PC-3 (cell line): ENCODE measurements at regions of chr2 and their contacts with region 1.

Region 1: DNA sequence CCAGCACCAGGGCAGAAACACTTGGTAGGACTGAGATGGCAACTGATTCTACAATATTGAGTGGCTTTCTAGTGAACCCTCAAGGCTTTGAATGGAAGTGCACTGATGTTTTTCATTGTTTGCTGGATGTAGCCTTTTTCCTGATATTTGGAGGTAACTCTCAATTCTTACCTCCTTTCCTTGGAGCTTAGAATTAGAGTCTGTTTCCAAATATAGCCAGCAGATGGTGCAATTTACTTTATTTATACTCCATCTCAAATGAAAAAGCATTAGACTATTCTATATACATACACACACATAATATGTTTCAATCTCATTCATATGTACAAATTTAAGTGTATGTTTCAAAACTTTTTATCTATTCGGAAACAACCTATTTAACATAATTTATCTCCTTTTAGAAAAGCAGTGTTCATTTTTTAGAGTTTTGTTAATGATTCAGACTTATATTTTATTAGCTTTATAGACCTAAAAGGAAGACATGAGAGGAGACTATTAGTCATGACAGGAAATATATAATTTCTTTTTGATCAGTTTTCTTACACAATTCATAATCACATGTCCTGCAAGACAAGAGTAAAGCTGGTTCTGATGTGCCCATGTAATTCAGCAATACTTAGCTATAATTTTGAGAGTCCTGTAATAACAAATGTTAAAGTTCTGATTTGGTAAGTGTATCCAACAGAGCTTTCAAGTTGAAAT is 124.8 kb downstream of the NUP35 start:
- DNase-seq: peak; percentile 69
- ATAC-seq: peak; percentile 70
- H3K4me3 ChIP-seq: no peak overlapping the region
- H3K27ac ChIP-seq: no peak overlapping the region
- H3K4me1 ChIP-seq: no peaks in the 10 kb centered on the region
- H3K27me3 ChIP-seq: no peaks in the 10 kb centered on the region
- CTCF ChIP-seq: peak; percentile 81

Region 2: DNA sequence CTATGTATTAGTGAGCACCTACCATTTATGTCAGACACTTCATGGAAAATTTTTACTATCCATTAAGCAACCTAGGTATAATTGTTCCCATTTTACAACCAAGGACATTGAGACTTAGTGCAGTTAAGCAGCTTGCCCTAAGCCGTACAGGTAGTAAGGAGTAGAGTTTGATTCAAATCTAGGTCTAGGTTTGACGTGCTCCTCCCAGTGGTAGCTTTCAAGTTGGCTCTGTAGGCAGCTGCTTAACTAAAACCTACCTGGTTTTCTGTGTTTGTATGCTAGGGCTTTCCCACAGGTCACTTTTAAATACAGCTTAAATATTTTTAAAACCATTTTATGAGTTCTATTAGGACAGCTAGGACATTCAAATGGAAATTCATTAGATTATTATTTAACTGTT is 55.1 kb before region 1 on chr2:
- CTCF ChIA-PET with region 1: no interaction called
- POLR2A ChIA-PET with region 1: no interaction called
- intact Hi-C with region 1: no loop called
- DNase-seq: no peak
- ATAC-seq: no peak
- H3K4me3 ChIP-seq: no peak overlapping the region
- H3K27ac ChIP-seq: no peak overlapping the region
- H3K4me1 ChIP-seq: no peaks in the 10 kb centered on the region
- H3K27me3 ChIP-seq: no peaks in the 10 kb centered on the region
- CTCF ChIP-seq: no peak

Region 3: GRCh38 chr2:183292028-183292427 is 43.0 kb after region 1 on chr2:
- CTCF ChIA-PET with region 1: no interaction called
- POLR2A ChIA-PET with region 1: no interaction called
- intact Hi-C with region 1: loop called (anchors 2 kb)
- DNase-seq: no peak
- ATAC-seq: no peak
- H3K4me3 ChIP-seq: no peak overlapping the region
- H3K27ac ChIP-seq: no peak overlapping the region
- H3K4me1 ChIP-seq: peaks cover 3% of the 10 kb centered on the region; the same call in 1 of the 2 replicates
- H3K27me3 ChIP-seq: no peaks in the 10 kb centered on the region
- CTCF ChIP-seq: no peak

Region 4: GRCh38 chr2:183359867-183360266 is 110.8 kb after region 1 on chr2:
- CTCF ChIA-PET with region 1: interaction called, 3 read pairs
- POLR2A ChIA-PET with region 1: no interaction called
- intact Hi-C with region 1: loop called (anchors 1 kb)
- DNase-seq: peak; percentile 33
- ATAC-seq: no peak
- H3K4me3 ChIP-seq: no peak overlapping the region
- H3K27ac ChIP-seq: no peak overlapping the region
- H3K4me1 ChIP-seq: no peaks in the 10 kb centered on the region
- H3K27me3 ChIP-seq: no peaks in the 10 kb centered on the region
- CTCF ChIP-seq: peak; percentile 53